Esophagus muscularis mucosa (tissue), 4 donors: ENCODE measurements at regions of chr7 and their contacts with region 1.

Region 1: GRCh38 chr7:96075510-96076349 is 246.2 kb downstream of the SLC25A13 start:
- DNase-seq: no peak
- H3K4me3 ChIP-seq: peak overlapping the region; percentile 53 to 63 (median 55)
- H3K27ac ChIP-seq: no peak overlapping the region
- H3K4me1 ChIP-seq: peaks cover 7 to 12% (median 11%) of the 10 kb centered on the region in 4 donors
- H3K27me3 ChIP-seq: no peaks in the 10 kb centered on the region
- CTCF ChIP-seq: peak; percentile 67 to 87 (median 74)
- EP300 ChIP-seq: no peak
- POLR2A ChIP-seq: no peak

Region 2: GRCh38 chr7:97027427-97028234 is 951.9 kb after region 1 on chr7:
- intact Hi-C with region 1: loop called (anchors 5 kb)
- DNase-seq: peak; percentile 92
- H3K4me3 ChIP-seq: peak overlapping the region; percentile 47 to 53 (median 50)
- H3K27ac ChIP-seq: no peak overlapping the region
- H3K4me1 ChIP-seq: peaks cover 21 to 51% (median 42%) of the 10 kb centered on the region in 4 donors
- H3K27me3 ChIP-seq: peaks cover 0 to 84% (median 35%) of the 10 kb centered on the region in 4 donors
- CTCF ChIP-seq: peak; percentile 69 to 82 (median 82)
- EP300 ChIP-seq: no peak
- POLR2A ChIP-seq: no peak